Activated T-helper 2 cell treated with anti-CD3 and anti-CD28 coated beads, Interferon-gamma antibody, Interleukin-2, Interleukin-4, amounts not matched to agents 10 μg/mL and 5 μg/mL and 100 μg/mL, durations not matched to agents 14 hours and 24 hours and 36 hours (primary cell): ENCODE measurements at regions of chrX and their contacts with region 1.

Region 1: DNA sequence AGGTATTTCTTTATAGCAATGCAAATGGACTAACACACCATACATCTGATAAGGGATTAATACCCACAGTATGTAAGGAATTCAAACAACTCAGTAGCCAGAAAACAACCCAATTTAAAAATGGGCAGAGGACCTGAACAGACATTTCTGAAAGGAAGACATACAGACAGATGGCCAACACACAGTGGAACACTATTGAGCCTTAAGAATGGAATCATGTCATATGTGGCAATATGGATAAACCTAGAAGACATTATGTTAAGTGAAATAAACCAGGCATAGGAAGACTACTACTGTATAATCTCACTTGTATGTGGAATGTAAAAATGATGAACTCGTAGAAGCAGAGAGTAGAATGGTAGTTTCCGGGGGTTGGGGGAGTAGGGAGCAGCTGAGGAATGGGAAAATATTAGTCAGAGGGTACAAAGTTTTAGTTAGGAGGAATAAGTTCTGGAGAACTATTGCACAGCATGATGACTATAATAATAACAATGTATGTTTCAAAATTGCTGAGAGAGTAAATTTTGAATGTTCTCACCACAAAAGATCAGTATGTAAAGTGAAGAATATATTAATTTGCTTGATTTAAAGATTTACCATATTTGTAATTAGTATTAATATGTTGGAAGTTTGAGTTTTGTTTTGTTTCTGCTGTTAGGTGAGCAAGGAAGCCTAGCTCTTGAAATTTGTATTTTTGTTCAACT is 25.2 kb downstream of the WDR44 start:
- DNase-seq: no peak
- H3K4me3 Mint-ChIP-seq: no peak overlapping the region
- H3K27ac Mint-ChIP-seq: peak overlapping the region; percentile 25
- H3K4me1 Mint-ChIP-seq: peaks cover 4% of the 10 kb centered on the region
- H3K27me3 Mint-ChIP-seq: no peaks in the 10 kb centered on the region

Region 2: DNA sequence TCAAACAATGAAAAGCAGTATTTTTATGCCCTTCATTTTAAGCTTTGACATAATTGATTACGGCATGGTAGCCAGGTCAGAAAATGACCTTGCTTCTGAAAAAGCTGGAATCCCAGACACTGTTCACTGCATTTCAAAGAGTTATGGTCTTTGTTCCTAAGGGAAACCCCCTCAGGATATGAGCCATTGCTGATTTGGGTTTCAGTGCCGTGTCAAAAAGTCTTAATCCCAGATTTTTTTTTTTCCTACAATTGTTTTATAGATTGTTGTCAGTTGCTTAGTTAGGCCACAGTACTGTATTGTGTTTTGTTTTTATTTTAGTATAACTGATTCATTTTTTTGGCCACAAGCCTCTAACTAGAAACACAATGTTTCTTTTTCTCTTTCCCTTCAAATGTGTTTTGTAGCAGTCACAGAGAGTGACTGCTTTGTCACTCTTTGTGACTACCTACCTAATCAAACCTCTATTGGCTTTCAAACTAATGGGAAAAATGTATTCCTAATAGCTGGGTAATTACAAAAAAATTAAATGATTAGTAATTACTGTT is 14.8 kb before region 1 on chrX:
- intact Hi-C with region 1: loop called (anchors 1 kb)
- DNase-seq: no peak
- H3K4me3 Mint-ChIP-seq: no peak overlapping the region
- H3K27ac Mint-ChIP-seq: no peak overlapping the region
- H3K4me1 Mint-ChIP-seq: peaks cover 22% of the 10 kb centered on the region
- H3K27me3 Mint-ChIP-seq: no peaks in the 10 kb centered on the region